CD4-positive, alpha-beta T cell (primary cell): ENCODE measurements at regions of chr11 and their contacts with region 1.

Region 1: GRCh38 chr11:62841361-62842184 is 2.2 kb upstream of the WDR74 start:
- DNase-seq: peak; percentile 68 to 95 (median 81)
- ATAC-seq: peak; percentile 42
- H3K4me3 ChIP-seq: peak overlapping the region; percentile 72
- H3K4me3 Mint-ChIP-seq: no peak overlapping the region
- H3K27ac ChIP-seq: peak overlapping the region; percentile 97 to 100
- H3K27ac Mint-ChIP-seq: no peak overlapping the region
- H3K4me1 ChIP-seq: peaks cover 44% of the 10 kb centered on the region
- H3K4me1 Mint-ChIP-seq: peaks cover 22% of the 10 kb centered on the region
- H3K27me3 ChIP-seq: no peaks in the 10 kb centered on the region
- H3K27me3 Mint-ChIP-seq: no peaks in the 10 kb centered on the region
- CTCF ChIP-seq: no peak

Region 2: GRCh38 chr11:62556108-62556871 is 285.3 kb before region 1 on chr11:
- CTCF ChIA-PET with region 1: no interaction called
- POLR2A ChIA-PET with region 1: interaction called, 18 read pairs
- intact Hi-C with region 1: no loop called
- DNase-seq: peak; percentile 72 to 94 (median 83)
- ATAC-seq: peak; percentile 46
- H3K4me3 ChIP-seq: peak overlapping the region; percentile 49
- H3K4me3 Mint-ChIP-seq: peak overlapping the region; percentile 84
- H3K27ac ChIP-seq: peak overlapping the region; percentile 96 to 97
- H3K27ac Mint-ChIP-seq: peak overlapping the region; percentile 95
- H3K4me1 ChIP-seq: peaks cover 95% of the 10 kb centered on the region
- H3K4me1 Mint-ChIP-seq: peaks cover 84% of the 10 kb centered on the region
- H3K27me3 ChIP-seq: no peaks in the 10 kb centered on the region
- H3K27me3 Mint-ChIP-seq: no peaks in the 10 kb centered on the region
- CTCF ChIP-seq: no peak

Region 3: GRCh38 chr11:62645956-62646824 is 195.4 kb before region 1 on chr11 and contains the start of gene GANAB:
- CTCF ChIA-PET with region 1: no interaction called
- POLR2A ChIA-PET with region 1: interaction called, 11 read pairs
- intact Hi-C with region 1: no loop called
- DNase-seq: peak; percentile 97 to 100 (median 99)
- ATAC-seq: peak; percentile 98
- H3K4me3 ChIP-seq: peak within 1 kb of the TSS; percentile 98
- H3K4me3 Mint-ChIP-seq: peak within 1 kb of the TSS; percentile 96
- H3K27ac ChIP-seq: peak within 1 kb of the TSS; percentile 82 to 97
- H3K27ac Mint-ChIP-seq: peak within 1 kb of the TSS; percentile 99
- H3K4me1 ChIP-seq: peaks cover 42% of the 10 kb centered on the region
- H3K4me1 Mint-ChIP-seq: peaks cover 29% of the 10 kb centered on the region
- H3K27me3 ChIP-seq: no peaks in the 10 kb centered on the region
- H3K27me3 Mint-ChIP-seq: no peaks in the 10 kb centered on the region
- CTCF ChIP-seq: no peak
- total RNA-seq, gene GANAB: 181 to 182 TPM

Region 4: GRCh38 chr11:62678770-62679696 is 162.5 kb before region 1 on chr11 and contains the start of gene UBXN1:
- CTCF ChIA-PET with region 1: no interaction called
- POLR2A ChIA-PET with region 1: interaction called, 10 read pairs
- intact Hi-C with region 1: no loop called
- DNase-seq: peak; percentile 68 to 93 (median 76)
- ATAC-seq: peak; percentile 84
- H3K4me3 ChIP-seq: peak within 1 kb of the TSS; percentile 100
- H3K4me3 Mint-ChIP-seq: peak within 1 kb of the TSS; percentile 91
- H3K27ac ChIP-seq: peak within 1 kb of the TSS; percentile 97
- H3K27ac Mint-ChIP-seq: peak within 1 kb of the TSS; percentile 87
- H3K4me1 ChIP-seq: peaks cover 33% of the 10 kb centered on the region
- H3K4me1 Mint-ChIP-seq: peaks cover 46% of the 10 kb centered on the region
- H3K27me3 ChIP-seq: no peaks in the 10 kb centered on the region
- H3K27me3 Mint-ChIP-seq: no peaks in the 10 kb centered on the region
- CTCF ChIP-seq: no peak
- total RNA-seq, gene UBXN1: 196 to 222 TPM

Region 5: GRCh38 chr11:62771144-62772021 is 70.2 kb before region 1 on chr11 and contains the start of gene TAF6L:
- CTCF ChIA-PET with region 1: no interaction called
- POLR2A ChIA-PET with region 1: interaction called, 61 read pairs
- intact Hi-C with region 1: no loop called
- DNase-seq: peak; percentile 81 to 95 (median 88)
- ATAC-seq: peak; percentile 76
- H3K4me3 ChIP-seq: peak within 1 kb of the TSS; percentile 76
- H3K4me3 Mint-ChIP-seq: peak within 1 kb of the TSS; percentile 97
- H3K27ac ChIP-seq: peak within 1 kb of the TSS; percentile 79 to 88
- H3K27ac Mint-ChIP-seq: peak within 1 kb of the TSS; percentile 97
- H3K4me1 ChIP-seq: peaks cover 27% of the 10 kb centered on the region
- H3K4me1 Mint-ChIP-seq: peaks cover 24% of the 10 kb centered on the region
- H3K27me3 ChIP-seq: no peaks in the 10 kb centered on the region
- H3K27me3 Mint-ChIP-seq: no peaks in the 10 kb centered on the region
- CTCF ChIP-seq: no peak
- total RNA-seq, gene TAF6L: 11.5 to 11.8 TPM

Region 6: DNA sequence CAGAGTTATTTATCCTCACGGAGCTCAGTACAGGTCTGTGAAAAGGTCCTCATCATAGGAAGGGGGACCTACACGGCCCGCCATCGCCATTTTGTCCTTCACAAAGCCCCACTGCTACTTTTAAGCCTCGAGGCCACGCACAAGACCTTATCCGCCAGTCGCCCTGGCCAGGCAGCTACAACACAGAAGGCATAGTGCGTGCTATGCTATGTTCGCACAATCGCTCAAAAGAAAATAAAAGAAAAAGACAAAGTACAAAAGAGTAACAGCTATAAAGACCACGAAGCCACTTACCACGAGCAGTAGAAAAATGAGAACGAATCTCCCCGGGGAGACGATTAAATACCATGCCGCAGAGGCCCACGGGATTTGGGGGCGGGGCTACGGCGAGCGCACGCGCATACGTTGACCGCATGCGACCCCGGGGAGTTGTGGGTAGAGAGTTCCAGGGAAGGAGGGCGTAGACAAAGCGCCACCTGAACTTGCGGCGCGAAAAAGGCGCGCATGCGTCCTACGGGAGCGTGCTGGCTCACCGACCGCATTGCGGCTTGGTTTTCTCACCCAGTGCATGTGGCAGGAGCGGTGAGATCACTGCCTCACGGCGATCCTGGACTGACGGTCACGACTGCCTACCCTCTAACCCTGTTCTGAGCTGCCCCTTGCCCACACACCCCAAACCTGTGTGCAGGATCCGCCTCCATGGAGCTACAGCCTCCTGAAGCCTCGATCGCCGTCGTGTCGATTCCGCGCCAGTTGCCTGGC is 14.2 kb after region 1 on chr11:
- CTCF ChIA-PET with region 1: interaction called, 8 read pairs
- POLR2A ChIA-PET with region 1: interaction called, 599 read pairs
- intact Hi-C with region 1: loop called (anchors 1 kb)
- DNase-seq: peak; percentile 96 to 99 (median 98)
- ATAC-seq: peak; percentile 92
- H3K4me3 ChIP-seq: peak overlapping the region; percentile 79
- H3K4me3 Mint-ChIP-seq: peak overlapping the region; percentile 98
- H3K27ac ChIP-seq: peak overlapping the region; percentile 66 to 72
- H3K27ac Mint-ChIP-seq: peak overlapping the region; percentile 90
- H3K4me1 ChIP-seq: peaks cover 41% of the 10 kb centered on the region
- H3K4me1 Mint-ChIP-seq: peaks cover 63% of the 10 kb centered on the region
- H3K27me3 ChIP-seq: no peaks in the 10 kb centered on the region
- H3K27me3 Mint-ChIP-seq: no peaks in the 10 kb centered on the region
- CTCF ChIP-seq: no peak

Region 7: DNA sequence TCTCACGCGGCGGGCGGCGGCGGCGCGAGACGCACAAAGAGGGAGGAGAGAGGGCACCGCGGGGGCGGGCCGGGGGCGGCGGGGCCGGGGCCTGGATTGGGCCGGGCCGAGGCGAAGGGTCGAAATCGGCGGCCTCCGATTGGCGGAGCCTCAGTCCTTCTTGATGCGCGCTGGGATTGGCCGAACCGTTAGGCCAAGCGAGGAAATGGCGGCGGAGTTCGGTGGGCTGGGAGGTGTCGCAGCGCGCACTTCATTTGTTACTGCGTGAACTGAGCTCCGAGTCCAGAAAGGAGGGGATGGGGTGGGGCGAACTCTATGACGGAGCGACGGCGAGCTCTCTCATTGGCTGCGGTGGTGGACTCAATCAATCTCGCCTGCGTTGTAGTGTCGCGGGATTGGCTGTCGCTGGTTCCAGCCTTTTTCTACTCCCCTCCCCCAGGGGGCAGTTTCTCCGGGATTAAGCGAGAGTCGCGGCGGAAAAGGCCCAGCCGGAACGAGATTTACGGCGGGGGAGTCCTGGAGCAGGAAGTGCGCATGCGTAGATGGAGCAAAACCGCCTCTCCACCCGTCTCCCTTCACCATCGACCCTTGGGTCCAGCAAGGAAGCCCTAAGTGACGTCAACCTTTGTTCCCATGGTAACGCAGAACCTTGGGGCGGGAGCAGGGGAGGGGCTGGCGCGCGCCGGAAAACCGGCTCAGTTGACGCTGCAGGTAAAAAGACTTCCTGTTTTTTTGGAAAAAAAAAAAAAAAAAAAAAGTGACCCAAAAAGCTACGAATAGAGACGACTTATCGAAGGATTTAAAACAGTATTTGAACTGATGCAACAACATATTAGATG is 1937.2 kb after region 1 on chr11 and contains the start of gene SF1:
- CTCF ChIA-PET with region 1: no interaction called
- POLR2A ChIA-PET with region 1: interaction called, 11 read pairs
- intact Hi-C with region 1: no loop called
- DNase-seq: peak; percentile 96 to 100 (median 98)
- ATAC-seq: peak; percentile 81
- H3K4me3 ChIP-seq: peak within 1 kb of the TSS; percentile 74
- H3K4me3 Mint-ChIP-seq: peak within 1 kb of the TSS; percentile 95
- H3K27ac ChIP-seq: peak within 1 kb of the TSS; percentile 94 to 98
- H3K27ac Mint-ChIP-seq: peak within 1 kb of the TSS; percentile 99
- H3K4me1 ChIP-seq: peaks cover 52% of the 10 kb centered on the region
- H3K4me1 Mint-ChIP-seq: peaks cover 70% of the 10 kb centered on the region
- H3K27me3 ChIP-seq: no peaks in the 10 kb centered on the region
- H3K27me3 Mint-ChIP-seq: no peaks in the 10 kb centered on the region
- CTCF ChIP-seq: peak; percentile 14
- total RNA-seq, gene SF1: 1,632 to 1,657 TPM